Heart left ventricle (tissue), 16 donors: ENCODE measurements at regions of chr9 and their contacts with region 1.

Region 1: GRCh38 chr9:83334320-83334719 is 203.9 kb downstream of the FRMD3 start:
- DNase-seq: peak; percentile 80 to 91 (median 82)
- ATAC-seq: peak; percentile 60 to 95 (median 93)
- H3K4me3 ChIP-seq: no peak overlapping the region
- H3K27ac ChIP-seq: no peak overlapping the region
- H3K4me1 ChIP-seq: peaks cover 0 to 9% (median 0%) of the 10 kb centered on the region in 12 donors
- H3K27me3 ChIP-seq: no peaks in the 10 kb centered on the region
- CTCF ChIP-seq: peak; percentile 89 to 99 (median 96)
- POLR2A ChIP-seq: no peak

Region 2: DNA sequence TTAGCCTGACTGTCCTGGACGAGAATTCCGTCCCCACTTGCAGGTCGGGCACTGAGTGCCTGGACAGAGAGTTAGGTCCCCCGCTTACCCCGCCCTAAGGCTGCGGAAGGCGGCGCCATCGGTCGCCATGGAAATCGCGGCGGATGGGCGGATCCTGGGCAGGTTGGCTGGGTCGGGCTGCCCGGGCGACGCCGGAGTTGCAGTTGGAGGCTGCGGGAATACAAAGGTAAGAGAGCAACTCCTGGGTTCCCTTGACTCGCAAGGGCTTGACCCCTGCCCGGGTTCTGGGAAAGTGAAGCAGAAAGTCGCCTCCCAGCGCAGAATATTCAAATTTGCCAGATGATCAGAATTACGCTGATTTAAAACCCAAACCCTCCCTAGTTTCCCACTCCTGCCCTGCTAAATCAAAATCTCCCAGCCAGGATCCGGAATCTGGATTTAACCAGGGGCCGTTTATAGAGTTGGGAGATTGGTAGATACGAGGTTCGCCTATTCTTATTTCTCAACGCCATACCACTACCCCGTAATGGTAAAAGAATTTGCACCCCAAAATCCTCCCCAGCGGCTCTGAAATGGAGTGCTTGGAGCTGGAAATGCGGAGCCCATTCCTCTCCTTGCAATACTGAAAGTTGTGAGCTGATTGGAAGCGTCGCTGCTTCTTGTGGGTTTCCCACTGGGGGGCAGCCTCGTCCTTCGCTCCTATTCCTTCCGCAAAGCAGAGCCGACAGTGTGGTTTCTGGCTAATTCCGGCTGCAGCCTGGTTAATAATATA is 115.0 kb before region 1 on chr9:
- intact Hi-C with region 1: loop called in 8 of 10 experiments (anchors 1 to 10 kb)
- DNase-seq: peak; percentile 79 to 90 (median 84)
- ATAC-seq: peak; percentile 93 to 97 (median 97)
- H3K4me3 ChIP-seq: peak overlapping the region; percentile 44 to 73 (median 62)
- H3K27ac ChIP-seq: peak overlapping the region; percentile 19 to 82 (median 73)
- H3K4me1 ChIP-seq: peaks cover 0 to 27% (median 18%) of the 10 kb centered on the region in 12 donors
- H3K27me3 ChIP-seq: no peaks in the 10 kb centered on the region
- CTCF ChIP-seq: peak; percentile 47 to 84 (median 68)
- POLR2A ChIP-seq: peak in 1 of 2 donors; percentile 24

Region 3: DNA sequence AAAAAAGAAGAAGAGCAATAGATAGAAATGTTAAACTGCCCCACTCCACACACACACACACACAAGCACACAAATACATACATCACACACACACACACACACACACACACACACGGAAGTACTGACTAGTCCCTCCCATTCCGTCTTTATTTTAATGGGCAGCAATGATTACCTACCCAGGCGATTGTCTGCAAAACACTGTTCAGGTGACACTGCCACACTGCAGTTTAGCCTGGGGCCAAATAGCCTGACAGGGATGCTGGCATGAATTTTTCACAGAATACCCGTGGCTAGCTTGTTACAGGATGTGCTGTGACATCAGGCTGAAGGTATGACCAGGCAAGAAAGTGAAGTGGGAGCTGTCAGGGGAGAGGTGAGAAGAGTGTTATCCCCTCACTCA is 117.0 kb after region 1 on chr9:
- intact Hi-C with region 1: loop called in 1 of 10 experiments (anchors 10 kb)
- DNase-seq: no peak
- ATAC-seq: no peak
- H3K4me3 ChIP-seq: no peak overlapping the region
- H3K27ac ChIP-seq: no peak overlapping the region
- H3K4me1 ChIP-seq: peaks cover 0 to 28% (median 6%) of the 10 kb centered on the region in 12 donors
- H3K27me3 ChIP-seq: no peaks in the 10 kb centered on the region
- CTCF ChIP-seq: no peak
- POLR2A ChIP-seq: no peak

Region 4: DNA sequence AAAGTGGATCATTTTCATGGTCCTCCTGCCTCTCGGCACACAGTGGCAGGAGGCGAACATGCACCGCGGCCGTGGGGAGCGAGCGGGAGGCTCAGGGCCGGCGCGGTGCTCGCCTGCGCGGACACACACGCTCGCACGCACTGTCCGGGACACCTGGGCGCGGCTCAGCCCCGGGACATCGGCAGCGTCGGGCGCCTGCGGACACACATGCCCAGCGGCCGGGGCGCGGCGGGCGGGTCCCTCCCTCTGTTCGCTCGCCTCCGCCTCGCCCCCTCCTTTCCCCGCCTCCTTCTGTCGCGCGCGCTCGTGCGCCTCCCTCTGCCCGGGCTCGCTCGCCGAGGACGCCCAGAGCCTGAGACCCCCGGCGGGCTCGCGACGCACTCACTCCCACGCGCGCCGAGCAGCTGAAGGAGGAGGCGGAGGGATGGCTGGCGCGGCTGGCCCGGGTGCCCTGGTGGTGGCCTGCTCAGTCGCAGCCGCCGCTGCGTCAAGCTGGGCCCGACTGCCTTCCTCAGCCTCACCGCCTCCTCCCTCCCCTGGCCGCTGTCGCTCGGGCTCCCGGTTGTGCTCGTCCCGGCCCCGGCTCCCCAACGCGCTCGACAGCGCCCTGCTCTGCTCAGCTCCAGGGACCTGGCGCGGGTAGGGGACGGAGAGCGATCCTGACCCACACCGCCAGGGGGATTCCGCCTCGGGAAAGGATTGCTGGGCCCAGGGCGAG is 204.0 kb after region 1 on chr9 and contains the start of gene FRMD3:
- intact Hi-C with region 1: loop called in 6 of 10 experiments (anchors 2 kb)
- DNase-seq: peak; percentile 89 to 94 (median 92)
- ATAC-seq: peak; percentile 96 to 98 (median 97)
- H3K4me3 ChIP-seq: peak within 1 kb of the TSS; percentile 52 to 88 (median 76)
- H3K27ac ChIP-seq: peak within 1 kb of the TSS; percentile 33 to 91 (median 82)
- H3K4me1 ChIP-seq: peaks cover 0 to 22% (median 10%) of the 10 kb centered on the region in 12 donors
- H3K27me3 ChIP-seq: peaks cover 0 to 11% (median 0%) of the 10 kb centered on the region in 9 donors
- CTCF ChIP-seq: peak; percentile 65 to 94 (median 84)
- POLR2A ChIP-seq: peak in 1 of 2 donors; percentile 42
- total RNA-seq, gene FRMD3: 48.4 to 195 (median 82.4) TPM

Region 5: GRCh38 chr9:83596896-83597504 is 262.7 kb after region 1 on chr9:
- intact Hi-C with region 1: loop called in 5 of 10 experiments (anchors 2 to 5 kb)
- DNase-seq: peak in 2 of 5 donors; percentile 21 to 27
- ATAC-seq: peak in 1 of 4 donors; percentile 49
- H3K4me3 ChIP-seq: no peak overlapping the region
- H3K27ac ChIP-seq: no peak overlapping the region
- H3K4me1 ChIP-seq: no peaks in the 10 kb centered on the region
- H3K27me3 ChIP-seq: no peaks in the 10 kb centered on the region
- CTCF ChIP-seq: peak; percentile 56 to 80 (median 66)
- POLR2A ChIP-seq: no peak